Dendritic cell treated with granulocyte-macrophage colony-stimulating factor and Interleukin-4, amounts not matched to agents 40 ng/mL and 50 ng/mL, for 4 days (primary cell): ENCODE measurements at regions of chrX and their contacts with region 1.

Region 1: DNA sequence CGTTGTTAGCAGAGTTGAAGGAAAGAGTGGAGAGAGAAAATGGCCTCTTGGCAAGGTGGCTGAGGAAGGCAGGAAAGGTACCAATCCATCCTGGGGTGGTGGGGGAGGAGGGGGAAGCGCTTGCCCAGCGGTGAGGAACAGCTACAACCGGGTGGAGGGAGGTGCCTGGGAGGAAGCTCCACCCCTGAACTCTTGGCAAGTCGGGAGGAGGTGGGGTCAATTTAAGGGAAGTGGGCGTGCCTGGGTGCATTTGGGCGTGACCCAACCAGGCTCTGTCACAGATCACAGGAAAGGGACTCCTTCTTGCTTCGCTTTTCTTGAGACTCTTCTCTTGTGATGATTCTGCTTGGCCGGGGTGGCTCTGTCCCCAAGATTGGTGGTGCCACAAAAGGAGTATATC is 41.7 kb downstream of the BCORL1 start:
- H3K4me3 Mint-ChIP-seq: peak overlapping the region; percentile 42
- H3K27ac Mint-ChIP-seq: peak overlapping the region; percentile 79
- H3K4me1 Mint-ChIP-seq: peaks cover 16% of the 10 kb centered on the region
- H3K27me3 Mint-ChIP-seq: no peaks in the 10 kb centered on the region

Region 2: DNA sequence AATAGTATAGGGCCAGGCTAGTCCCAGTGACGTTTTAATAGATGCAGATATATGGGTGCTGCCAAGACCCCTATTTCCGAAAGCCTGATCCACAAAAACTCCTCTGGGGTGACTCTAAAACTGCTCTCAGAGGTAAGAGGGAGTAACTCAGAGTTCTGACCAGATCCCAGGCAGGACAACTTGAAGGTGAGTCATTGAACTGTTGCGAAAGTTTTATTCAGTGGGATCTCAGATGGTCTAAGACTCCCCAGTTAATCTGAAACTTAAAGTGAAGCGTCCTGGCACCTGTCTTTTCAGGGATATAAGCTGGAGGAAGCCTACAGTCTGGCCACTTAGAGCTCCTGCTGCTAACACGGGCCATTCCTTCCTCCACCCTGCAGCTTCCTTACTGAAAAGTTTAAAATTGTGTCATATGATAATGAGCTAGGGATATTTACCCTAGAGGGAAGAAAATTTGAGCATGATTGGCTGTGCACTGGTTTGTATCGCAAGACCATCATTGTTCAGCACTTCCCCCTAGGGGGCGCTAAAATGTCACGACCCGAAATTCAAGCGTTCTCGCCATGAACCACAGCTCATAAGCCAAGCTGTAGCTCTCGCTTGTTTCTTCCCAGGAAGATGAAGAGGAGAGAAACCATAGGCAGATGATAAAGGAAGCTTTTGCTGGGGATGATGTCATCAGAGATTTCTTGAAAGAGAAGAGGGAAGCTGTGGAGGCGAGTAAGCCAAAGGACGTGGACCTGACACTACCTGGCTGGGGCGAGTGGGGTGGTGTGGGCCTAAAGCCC is 98.6 kb before region 1 on chrX:
- intact Hi-C with region 1: loop called (anchors 1 kb)
- H3K4me3 Mint-ChIP-seq: no peak overlapping the region
- H3K27ac Mint-ChIP-seq: no peak overlapping the region
- H3K4me1 Mint-ChIP-seq: peaks cover 18% of the 10 kb centered on the region
- H3K27me3 Mint-ChIP-seq: no peaks in the 10 kb centered on the region

Region 3: GRCh38 chrX:129931411-129932015 is 92.6 kb before region 1 on chrX:
- intact Hi-C with region 1: loop called (anchors 1 kb)
- H3K4me3 Mint-ChIP-seq: peak overlapping the region; percentile 91
- H3K27ac Mint-ChIP-seq: peak overlapping the region; percentile 91
- H3K4me1 Mint-ChIP-seq: peaks cover 10% of the 10 kb centered on the region
- H3K27me3 Mint-ChIP-seq: peaks cover 21% of the 10 kb centered on the region

Region 4: GRCh38 chrX:129987871-129988270 is 36.3 kb before region 1 on chrX:
- intact Hi-C with region 1: loop called (anchors 5 kb)
- H3K4me3 Mint-ChIP-seq: no peak overlapping the region
- H3K27ac Mint-ChIP-seq: peak overlapping the region; percentile 18
- H3K4me1 Mint-ChIP-seq: peaks cover 29% of the 10 kb centered on the region
- H3K27me3 Mint-ChIP-seq: peaks cover 3% of the 10 kb centered on the region